ENCODE measurements at regions of chr9 and their contacts with region 1.

Region 1: DNA sequence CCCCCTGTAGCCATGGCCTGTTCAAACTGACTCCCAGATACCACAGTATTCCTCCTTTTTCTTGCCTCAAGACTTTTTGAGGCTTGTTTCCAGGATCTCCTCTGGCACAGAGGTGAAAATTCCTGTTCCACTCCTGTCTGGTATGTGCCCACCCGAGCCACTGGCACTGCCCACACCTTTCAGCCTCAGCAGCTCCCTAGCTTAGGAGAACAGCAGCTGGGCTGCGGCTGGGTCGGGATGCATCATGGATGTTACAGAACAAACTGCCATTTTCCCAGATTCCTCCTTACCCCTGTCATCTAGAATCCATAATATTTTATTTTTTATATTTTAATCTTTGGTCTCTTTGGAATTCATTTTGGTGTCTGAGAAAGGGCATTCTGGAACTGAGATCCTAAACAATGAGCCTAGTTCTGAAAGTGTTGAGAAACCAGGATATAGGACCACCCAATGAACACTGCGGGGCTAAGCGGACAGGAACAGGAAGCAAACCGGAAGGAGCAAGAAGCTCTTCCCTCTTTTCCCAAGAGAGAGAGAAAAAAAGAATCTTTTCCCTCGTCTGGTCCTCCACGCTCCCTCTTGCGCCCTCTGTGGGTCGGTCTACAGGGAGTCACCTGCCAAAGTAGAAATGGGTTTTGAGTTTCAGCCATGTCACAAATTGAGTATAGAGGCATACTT is 12.5 kb downstream of the OR2S2 start:
- DNase-seq: peak in 9 of 10 donors; percentile 62 to 93 (median 70)

Region 2: DNA sequence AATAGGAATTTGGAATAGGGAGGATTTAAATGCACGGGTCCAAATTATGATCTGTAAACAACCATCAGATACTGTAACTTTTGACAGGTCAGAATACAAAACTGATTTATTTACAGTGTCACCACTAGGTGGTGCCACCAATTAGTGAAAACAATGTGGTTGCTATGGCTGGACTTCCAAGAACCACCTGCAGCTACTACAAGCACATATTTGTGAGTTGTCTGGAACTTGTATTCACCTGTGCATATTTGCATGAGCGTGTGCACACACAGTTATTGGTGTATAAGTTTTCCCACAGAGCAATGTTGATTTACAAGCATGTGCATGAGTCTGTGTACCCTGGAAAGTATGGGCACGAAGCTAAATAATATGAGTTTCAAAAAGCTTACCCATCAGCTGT is 42.4 kb before region 1 on chr9:
- intact Hi-C with region 1: loop called (anchors 2 kb)
- DNase-seq: no peak

Region 3: GRCh38 chr9:36008774-36009300 is 63.4 kb after region 1 on chr9:
- intact Hi-C with region 1: no loop called
- DNase-seq: peak in 6 of 10 donors; percentile 9 to 89 (median 49)

Region 4: DNA sequence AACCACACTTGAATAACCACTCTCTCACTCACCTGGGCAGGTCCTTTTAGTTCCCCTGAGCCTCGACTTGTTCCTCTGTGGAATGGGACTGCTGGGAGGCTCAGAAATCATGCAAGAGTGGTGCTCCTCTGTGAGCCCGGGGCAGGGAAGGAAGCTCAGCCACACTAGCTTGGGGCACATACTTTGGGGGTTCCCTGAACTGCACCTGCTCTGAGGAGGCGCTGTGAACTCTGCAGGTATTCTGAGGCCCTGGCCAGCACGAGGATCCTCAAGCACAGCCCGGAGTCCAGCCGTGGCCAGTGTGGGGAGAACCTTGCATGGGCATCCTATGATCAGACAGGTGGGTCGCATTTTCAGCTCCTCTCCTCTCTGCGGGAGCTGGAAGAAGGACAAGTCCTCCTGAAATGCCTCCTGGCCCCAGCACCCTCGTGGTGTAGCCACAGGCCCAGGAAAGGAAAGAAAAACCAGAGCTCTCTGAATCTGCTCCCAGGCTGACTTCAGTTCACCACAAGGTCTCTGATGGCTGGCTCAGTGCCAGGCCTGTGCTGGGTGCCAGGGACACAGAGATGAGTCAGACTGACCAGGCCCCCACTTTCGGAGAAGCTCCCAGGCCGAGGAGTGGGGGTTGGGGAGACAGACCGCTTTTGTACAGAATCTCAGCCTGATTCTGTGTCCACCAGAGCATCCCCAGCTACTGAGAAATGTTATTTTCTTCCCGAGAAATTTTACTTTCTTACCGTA is 203.0 kb after region 1 on chr9:
- intact Hi-C with region 1: no loop called
- DNase-seq: peak; percentile 86 to 99 (median 96)

Measured in posterior cingulate gyrus (tissue), 11 donors.